AG04449 (cell line): ENCODE measurements at regions of chr9 and their contacts with region 1.

Region 1: DNA sequence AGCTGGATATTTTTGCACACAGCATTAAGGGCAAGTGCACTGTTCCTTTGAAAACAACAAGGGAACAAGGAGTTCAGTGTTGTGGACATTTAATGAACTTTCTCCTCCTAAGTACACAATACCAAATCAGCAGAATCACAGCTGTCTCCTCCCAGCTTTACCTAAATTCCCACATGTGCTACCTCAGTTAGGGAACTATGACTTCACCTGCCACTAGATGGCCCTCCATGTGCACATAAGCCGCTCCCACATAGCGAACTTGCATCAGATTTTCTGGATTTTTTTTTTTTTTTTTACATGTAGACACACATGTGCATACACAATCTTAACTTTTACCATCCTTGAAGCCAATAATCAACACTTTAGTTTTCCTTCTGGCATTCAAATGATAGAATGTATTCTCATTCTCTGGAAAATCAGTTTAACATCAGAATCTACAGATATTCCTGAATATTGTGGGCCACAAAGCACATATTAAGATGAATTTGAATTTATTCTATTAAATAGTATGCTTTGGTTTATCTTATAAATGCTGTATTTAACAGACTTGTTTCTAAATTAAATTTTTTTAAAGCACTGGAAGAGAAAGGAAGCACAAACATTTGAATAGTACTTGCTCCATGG is 123.6 kb downstream of the PALM2AKAP2 start:
- DNase-seq: no peak
- H3K4me3 ChIP-seq: no peak overlapping the region
- CTCF ChIP-seq: peak; percentile 72

Region 2: GRCh38 chr9:109893241-109893640 is 10.4 kb before region 1 on chr9:
- CTCF ChIA-PET with region 1: interaction called, 14 read pairs
- POLR2A ChIA-PET with region 1: no interaction called
- DNase-seq: no peak
- H3K4me3 ChIP-seq: no peak overlapping the region
- CTCF ChIP-seq: no peak

Region 3: DNA sequence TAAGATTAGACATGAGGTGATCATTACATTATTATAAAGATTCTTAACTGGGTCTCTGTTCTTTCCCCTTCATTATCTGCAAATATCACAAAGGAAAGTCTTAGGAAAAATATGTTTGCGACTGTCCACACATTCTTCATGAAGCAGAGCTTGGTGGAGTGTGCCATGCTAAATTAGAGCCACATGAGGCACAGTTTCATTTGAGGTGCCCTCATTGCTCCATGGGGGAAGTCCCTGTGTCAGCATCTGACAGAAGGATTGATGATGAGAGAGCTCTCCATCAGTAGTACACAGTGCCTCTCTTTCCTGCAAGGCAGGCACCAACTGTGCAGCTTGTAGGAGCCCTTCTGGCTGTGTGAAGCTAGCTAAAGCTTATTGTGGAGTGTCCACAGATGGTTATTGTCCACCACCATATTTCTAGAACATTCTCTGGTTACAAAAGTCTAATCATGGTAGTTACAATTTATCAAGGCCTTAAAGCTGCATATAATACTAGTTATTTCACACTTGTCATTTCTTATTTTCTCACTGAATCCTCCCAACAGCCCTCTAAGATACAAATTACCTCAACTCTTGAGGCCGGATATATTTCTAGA is 240.4 kb after region 1 on chr9:
- CTCF ChIA-PET with region 1: interaction called, 142 read pairs
- POLR2A ChIA-PET with region 1: interaction called, 5 read pairs
- DNase-seq: no peak
- H3K4me3 ChIP-seq: no peak overlapping the region
- CTCF ChIP-seq: no peak

Region 4: GRCh38 chr9:110183208-110184145 is 279.9 kb after region 1 on chr9:
- CTCF ChIA-PET with region 1: interaction called, 11 read pairs
- POLR2A ChIA-PET with region 1: no interaction called
- DNase-seq: peak; percentile 12
- H3K4me3 ChIP-seq: no peak overlapping the region
- CTCF ChIP-seq: peak; percentile 74

Region 5: GRCh38 chr9:110217656-110218099 is 314.1 kb after region 1 on chr9:
- CTCF ChIA-PET with region 1: interaction called, 29 read pairs
- POLR2A ChIA-PET with region 1: no interaction called
- DNase-seq: no peak
- H3K4me3 ChIP-seq: no peak overlapping the region
- CTCF ChIP-seq: peak; percentile 44

Region 6: GRCh38 chr9:111195766-111196165 is 1292.1 kb after region 1 on chr9:
- CTCF ChIA-PET with region 1: no interaction called
- POLR2A ChIA-PET with region 1: no interaction called
- DNase-seq: no peak
- H3K4me3 ChIP-seq: no peak overlapping the region
- CTCF ChIP-seq: no peak